ENCODE measurements at regions of chr1 and their contacts with region 1.

Region 1: DNA sequence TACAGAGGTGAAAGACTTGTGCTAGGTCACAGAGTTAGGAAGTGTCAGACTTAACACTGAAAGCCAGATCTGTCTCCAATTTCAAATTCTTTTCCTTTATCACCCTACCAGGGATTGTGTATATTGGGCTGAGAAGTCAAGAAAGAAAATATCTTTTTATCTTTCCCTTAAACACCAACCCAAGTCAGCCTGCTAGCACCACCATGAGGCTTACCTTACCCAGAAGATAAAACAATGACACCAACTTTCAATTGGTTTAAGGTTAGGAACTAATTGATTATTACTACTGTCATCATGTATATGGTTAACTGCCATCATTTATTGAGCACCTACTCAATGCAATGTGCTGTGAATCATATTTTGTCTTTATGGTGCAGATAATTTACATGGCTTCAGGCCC is 178.9 kb upstream of the FOXD3 start:
- DNase-seq: no peak
- H3K4me3 ChIP-seq: no peak overlapping the region
- H3K27ac ChIP-seq: no peak overlapping the region
- H3K4me1 ChIP-seq: no peaks in the 10 kb centered on the region
- H3K27me3 ChIP-seq: no peaks in the 10 kb centered on the region
- CTCF ChIP-seq: no peak

Region 2: DNA sequence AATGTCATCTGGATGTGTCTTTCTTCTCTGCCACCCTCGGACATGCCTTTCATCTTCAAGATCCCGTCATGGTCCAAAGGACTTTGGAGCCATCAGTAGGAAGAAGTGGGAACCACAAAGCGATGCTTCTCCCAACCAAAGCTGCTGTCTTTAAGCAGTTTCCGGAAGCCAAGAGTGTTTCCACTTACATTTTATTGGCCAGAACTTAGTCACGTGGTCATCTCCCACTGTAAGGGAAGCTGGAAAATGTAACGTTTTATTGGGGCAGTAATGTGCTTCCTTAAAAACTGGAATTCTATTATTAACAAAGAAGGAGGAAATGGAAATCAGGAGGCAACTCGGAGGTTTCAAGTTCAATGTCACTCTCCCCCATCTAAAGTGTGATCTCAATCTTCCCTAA is 188.7 kb before region 1 on chr1:
- intact Hi-C with region 1: loop called (anchors 5 kb)
- DNase-seq: no peak
- H3K4me3 ChIP-seq: no peak overlapping the region
- H3K27ac ChIP-seq: no peak overlapping the region
- H3K4me1 ChIP-seq: no peaks in the 10 kb centered on the region
- H3K27me3 ChIP-seq: no peaks in the 10 kb centered on the region
- CTCF ChIP-seq: no peak

Measured in colonic mucosa (tissue), 4 donors.